Activated T-helper 1 cell treated with anti-CD3 and anti-CD28 coated beads, Interleukin-12 subunit alpha, Interleukin-12 subunit beta, Interleukin-2, Interleukin-4 antibody, amounts not matched to agents 30 ng/mL and 10 ng/mL and 1 ng/mL, durations not matched to agents 14 hours and 24 hours and 36 hours (primary cell): ENCODE measurements at regions of chr15 and their contacts with region 1.

Region 1: GRCh38 chr15:95839367-95839782 is 491.1 kb upstream of the NR2F2 start:
- DNase-seq: peak; percentile 25
- H3K4me3 Mint-ChIP-seq: peak overlapping the region; percentile 38
- H3K27ac Mint-ChIP-seq: peak overlapping the region; percentile 64
- H3K4me1 Mint-ChIP-seq: peaks cover 46% of the 10 kb centered on the region
- H3K27me3 Mint-ChIP-seq: peaks cover 5% of the 10 kb centered on the region

Region 2: DNA sequence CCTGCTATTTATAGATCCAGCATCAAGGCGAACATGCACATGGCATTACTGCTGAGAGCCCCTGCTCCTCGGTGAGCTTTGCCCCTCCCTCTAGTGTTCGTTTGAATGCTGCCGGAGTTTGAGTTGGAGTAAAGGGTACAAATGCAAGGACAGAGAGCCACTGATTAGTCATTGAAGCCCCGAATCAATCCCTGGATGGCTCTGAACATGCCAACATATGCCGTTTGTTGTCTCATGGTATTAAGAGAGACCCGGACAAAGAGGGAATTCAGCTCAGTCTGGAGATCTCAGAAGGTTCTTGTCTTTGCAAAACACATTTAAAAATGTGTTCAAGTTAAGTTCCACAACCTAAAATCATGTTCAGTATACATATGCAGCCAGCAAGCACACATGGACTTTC is 298.1 kb before region 1 on chr15:
- intact Hi-C with region 1: no loop called
- DNase-seq: no peak
- H3K4me3 Mint-ChIP-seq: no peak overlapping the region
- H3K27ac Mint-ChIP-seq: no peak overlapping the region
- H3K4me1 Mint-ChIP-seq: no peaks in the 10 kb centered on the region
- H3K27me3 Mint-ChIP-seq: no peaks in the 10 kb centered on the region

Region 3: DNA sequence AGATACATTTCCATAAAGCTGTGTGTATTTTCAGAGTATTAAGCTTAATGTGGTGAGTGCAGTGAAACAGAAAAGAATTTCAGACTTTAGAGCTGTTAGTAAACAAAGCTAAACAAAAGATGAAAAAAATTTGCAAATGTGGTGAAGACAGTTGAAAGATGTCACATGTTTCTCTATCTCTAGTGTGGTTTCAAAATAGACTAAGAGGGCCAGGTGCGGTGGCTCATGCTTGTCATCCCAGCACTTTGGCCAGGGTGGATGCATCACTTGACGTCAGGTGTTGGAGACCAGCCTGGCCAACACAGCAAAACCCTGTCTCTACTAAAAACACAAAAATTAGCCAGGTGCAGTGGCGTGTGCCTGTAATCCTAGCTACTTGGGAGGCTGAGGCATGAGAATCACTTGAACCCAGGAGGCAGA is 25.1 kb after region 1 on chr15:
- intact Hi-C with region 1: loop called (anchors 2 kb)
- DNase-seq: no peak
- H3K4me3 Mint-ChIP-seq: no peak overlapping the region
- H3K27ac Mint-ChIP-seq: no peak overlapping the region
- H3K4me1 Mint-ChIP-seq: peaks cover 41% of the 10 kb centered on the region
- H3K27me3 Mint-ChIP-seq: peaks cover 41% of the 10 kb centered on the region

Region 4: DNA sequence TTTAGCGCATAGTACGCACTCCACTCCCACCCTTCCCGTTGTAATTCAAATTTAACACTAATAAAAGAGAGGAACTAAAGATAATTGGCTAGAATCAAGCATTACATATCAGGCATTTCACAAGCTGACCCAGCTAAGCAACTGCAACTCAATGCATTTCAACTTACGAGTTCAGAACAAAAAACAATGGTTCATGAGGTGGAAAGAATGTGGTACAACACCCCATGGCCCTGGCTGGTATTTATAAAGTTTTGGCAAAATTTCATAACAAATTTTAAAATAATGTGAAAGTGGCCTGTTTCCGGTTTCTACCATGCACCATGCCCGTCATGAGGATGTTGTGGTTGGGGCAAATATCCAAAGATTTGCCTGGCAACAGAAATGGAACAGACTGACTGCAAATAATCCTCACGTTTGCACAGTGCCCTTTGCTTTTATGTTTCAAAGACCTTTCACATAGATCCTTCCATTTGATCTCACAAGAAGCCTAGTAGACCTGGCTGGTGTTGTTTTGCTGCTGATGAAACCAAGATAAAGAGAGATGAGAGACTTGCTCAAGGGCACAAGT is 35.8 kb after region 1 on chr15:
- intact Hi-C with region 1: no loop called
- DNase-seq: no peak
- H3K4me3 Mint-ChIP-seq: no peak overlapping the region
- H3K27ac Mint-ChIP-seq: no peak overlapping the region
- H3K4me1 Mint-ChIP-seq: peaks cover 40% of the 10 kb centered on the region
- H3K27me3 Mint-ChIP-seq: peaks cover 3% of the 10 kb centered on the region

Region 5: DNA sequence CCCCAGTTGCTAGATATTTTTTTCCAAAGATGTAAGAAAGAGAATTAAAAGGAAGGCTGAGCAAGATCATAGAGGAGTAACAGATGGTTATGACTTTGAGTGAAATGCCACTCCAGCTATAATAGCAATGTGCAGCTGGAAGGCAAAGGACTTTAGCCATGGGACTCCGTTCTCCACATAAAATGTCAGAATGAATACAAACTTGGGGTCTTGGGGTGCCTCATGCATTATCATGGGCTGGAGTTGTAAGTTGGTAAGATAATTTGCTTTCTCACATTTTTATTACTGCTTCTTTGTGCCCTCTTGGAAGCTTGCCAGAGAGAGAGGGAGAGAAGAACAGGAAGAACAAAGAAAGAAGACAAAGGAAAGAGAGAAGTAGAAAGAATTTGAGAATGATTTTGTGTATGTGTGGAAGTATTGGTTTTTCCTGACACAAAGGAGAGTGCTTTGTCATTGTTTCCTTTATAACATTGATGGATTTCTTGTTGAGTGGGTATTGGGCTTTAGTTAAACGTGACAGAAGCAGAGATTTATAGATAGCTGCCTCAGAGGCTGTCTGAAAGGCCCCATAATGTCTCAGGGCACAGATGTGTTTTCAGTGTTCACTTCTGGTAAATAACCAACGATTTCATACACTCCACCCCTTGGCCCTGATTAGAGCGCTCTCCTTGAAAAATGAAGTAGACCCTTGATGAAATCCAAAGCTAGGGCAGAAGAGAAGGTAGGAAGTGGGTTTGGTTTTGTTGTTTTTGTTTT is 1206.5 kb after region 1 on chr15:
- intact Hi-C with region 1: no loop called
- DNase-seq: no peak
- H3K4me3 Mint-ChIP-seq: no peak overlapping the region
- H3K27ac Mint-ChIP-seq: no peak overlapping the region
- H3K4me1 Mint-ChIP-seq: no peaks in the 10 kb centered on the region
- H3K27me3 Mint-ChIP-seq: no peaks in the 10 kb centered on the region